GM18951 (cell line): ENCODE measurements at regions of chr3 and their contacts with region 1.

Region 1: DNA sequence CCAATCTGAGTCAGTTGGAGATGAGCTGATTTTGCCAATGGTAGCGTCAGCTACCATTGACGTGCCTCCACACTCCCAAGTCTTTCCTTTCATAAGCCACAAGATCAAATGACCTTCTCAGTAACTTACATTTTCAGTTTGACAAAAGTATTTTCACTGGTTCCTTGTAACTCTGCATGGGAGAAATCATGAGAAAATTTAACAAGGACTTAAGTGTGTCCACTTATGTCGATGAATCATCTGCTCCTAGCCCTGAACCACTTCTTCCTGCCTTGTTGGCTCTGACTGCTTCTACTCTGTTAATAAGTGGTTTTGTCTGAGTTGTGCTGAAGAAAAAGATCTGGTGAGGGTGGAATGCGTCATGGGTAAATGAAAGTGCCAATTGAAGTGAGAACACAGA is 101.2 kb downstream of the NFKBIZ start:
- POLR2A ChIP-seq: no peak

Region 2: GRCh38 chr3:101676765-101677435 is 273.6 kb before region 1 on chr3 and contains the start of gene ZBTB11:
- in situ Hi-C with region 1: no loop called
- POLR2A ChIP-seq: peak; percentile 70

Region 3: GRCh38 chr3:101988591-101988990 is 38.1 kb after region 1 on chr3:
- in situ Hi-C with region 1: loop called (anchors 5 kb)
- POLR2A ChIP-seq: no peak

Region 4: DNA sequence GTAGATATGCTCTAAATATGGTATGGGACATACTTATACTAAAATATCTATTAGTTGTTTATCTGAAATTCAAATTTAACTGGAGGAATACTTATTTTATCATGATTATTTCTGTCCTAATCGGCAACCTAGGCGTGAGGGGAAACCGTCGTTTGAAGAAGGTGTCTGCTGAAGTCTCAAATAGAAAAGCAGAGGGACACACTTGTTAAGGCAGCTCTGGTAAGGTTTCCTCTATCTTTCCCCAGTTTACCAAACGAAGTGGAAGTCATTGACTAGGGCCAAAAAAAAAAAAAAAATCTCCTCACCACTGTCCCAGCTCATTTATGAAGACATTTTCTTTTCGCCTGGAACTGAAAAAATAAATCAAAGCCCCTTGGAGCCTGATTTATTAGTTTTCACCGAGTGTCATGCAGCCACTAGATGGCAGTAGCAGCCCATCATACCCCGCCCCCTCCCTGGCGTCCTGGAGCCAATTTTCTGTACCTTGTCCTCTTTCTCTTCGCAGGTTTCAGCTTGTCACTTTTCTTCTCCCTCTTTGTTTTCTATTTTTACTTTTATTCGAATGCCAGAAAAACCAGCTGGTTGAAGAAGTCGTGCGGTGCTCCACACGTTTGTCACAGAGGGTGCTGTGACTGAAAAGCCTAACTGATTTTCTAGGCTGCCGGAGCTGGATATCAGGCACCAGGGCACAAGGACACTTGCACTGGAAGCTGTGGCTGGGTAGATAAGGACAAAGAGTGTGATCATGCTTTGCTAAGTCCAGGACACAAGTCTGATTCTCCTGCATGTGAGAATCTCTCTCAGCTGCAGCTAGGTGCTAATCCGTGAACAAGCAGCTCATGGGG is 723.0 kb after region 1 on chr3:
- in situ Hi-C with region 1: no loop called
- POLR2A ChIP-seq: no peak